PC-9 (cell line): ENCODE measurements at regions of chr7 and their contacts with region 1.

Region 1: GRCh38 chr7:90155206-90155605 is 937 bp downstream of the STEAP1 start:
- DNase-seq: no peak
- H3K4me3 ChIP-seq: peak overlapping the region; percentile 77; the same call in 1 of the 2 replicates
- H3K27ac ChIP-seq: no peak overlapping the region
- H3K4me1 ChIP-seq: peaks cover 17% of the 10 kb centered on the region
- H3K27me3 ChIP-seq: no peaks in the 10 kb centered on the region
- CTCF ChIP-seq: no peak

Region 2: DNA sequence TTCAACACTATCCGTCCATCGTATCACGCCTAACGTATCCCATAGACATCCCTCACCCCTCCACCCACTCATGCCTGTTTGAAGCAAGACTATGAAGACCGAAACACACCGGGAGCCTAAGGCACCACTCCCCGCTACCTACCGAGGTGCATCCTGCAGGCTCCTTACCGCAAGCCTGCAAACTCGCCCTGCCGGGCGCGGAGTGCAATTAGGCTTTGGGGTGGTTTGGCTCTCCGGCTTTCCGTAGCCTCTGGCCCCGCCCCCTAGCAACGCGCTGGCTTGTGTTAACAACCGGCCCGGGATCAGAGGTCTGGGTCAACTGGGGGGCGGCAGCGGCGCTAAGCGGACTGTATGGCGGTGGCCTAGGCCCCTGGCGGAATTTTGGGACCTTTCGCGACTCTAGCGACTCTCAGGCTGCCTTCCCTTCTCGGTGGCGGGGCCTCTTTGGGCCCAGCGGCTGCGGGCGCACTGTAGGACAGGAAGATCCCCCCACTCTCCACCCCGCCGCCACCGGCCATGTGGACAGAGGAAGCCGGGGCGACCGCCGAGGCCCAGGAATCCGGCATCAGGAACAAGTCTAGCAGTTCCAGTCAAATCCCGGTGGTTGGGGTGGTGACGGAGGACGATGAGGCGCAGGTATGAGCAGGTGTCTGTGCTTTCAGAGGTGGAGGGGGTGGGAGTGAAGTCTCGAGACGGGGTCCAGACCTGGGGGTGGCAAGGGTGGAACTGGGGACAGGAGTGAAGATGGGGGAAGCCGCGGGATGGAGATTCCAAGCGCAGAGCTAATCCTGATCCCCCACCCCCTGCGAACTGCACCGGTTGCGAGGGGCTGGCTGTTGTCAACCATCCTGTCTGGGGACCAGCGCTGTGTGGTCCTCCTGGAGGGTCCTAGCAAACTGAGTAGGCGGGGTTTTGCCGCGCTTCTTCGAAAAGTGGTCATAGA is 90.0 kb after region 1 on chr7 and contains the start of gene CFAP69:
- CTCF ChIA-PET with region 1: no interaction called
- POLR2A ChIA-PET with region 1: no interaction called
- intact Hi-C with region 1: loop called (anchors 1 kb)
- DNase-seq: peak; percentile 76 to 95
- H3K4me3 ChIP-seq: peak within 1 kb of the TSS; percentile 76
- H3K27ac ChIP-seq: no peak within 1 kb of the TSS
- H3K4me1 ChIP-seq: peaks cover 22% of the 10 kb centered on the region
- H3K27me3 ChIP-seq: no peaks in the 10 kb centered on the region
- CTCF ChIP-seq: 0 out of 2 replicates have a peak, but pooled peaks have one; percentile 18
- total RNA-seq, gene CFAP69: 15.0 and 18.5 TPM in 2 replicates

Region 3: GRCh38 chr7:90298145-90299038 is 143.2 kb after region 1 on chr7:
- CTCF ChIA-PET with region 1: no interaction called
- POLR2A ChIA-PET with region 1: no interaction called
- intact Hi-C with region 1: loop called (anchors 1 kb)
- DNase-seq: peak in 1 of 2 experiments; percentile 9
- H3K4me3 ChIP-seq: no peak overlapping the region
- H3K27ac ChIP-seq: no peak overlapping the region
- H3K4me1 ChIP-seq: no peaks in the 10 kb centered on the region
- H3K27me3 ChIP-seq: no peaks in the 10 kb centered on the region
- CTCF ChIP-seq: peak; percentile 64

Region 4: DNA sequence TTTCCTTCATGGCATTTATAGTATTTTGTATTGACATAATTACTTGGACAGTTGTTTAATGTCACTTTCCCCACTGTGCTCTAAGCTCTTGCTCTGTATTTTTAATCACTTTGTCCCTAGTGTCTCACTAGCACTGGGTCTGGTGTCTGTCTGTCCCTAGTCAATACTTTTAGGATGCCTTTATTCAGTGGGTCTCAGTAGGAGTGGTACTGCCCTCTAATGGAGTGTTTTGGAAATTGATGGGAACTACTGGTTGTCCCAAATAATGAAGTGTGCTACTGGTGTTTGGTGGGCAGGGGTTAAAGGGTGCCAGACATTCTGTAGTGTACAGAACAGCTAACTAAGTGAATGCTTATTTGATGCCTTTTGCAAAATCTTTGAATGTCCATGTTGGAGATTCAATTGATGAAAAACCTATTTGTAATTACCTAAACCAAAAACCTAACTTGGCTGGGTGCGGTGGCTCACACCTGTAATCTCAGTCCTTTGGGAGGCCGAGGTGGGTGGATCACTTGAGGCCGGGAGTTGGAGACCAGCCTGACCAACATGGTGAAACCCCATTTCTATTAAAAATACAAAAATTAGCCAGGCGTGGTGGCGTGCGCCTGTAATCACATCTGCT is 474.2 kb after region 1 on chr7:
- CTCF ChIA-PET with region 1: no interaction called
- POLR2A ChIA-PET with region 1: no interaction called
- intact Hi-C with region 1: loop called (anchors 10 kb)
- DNase-seq: no peak
- H3K4me3 ChIP-seq: no peak overlapping the region
- H3K27ac ChIP-seq: no peak overlapping the region
- H3K4me1 ChIP-seq: no peaks in the 10 kb centered on the region
- H3K27me3 ChIP-seq: no peaks in the 10 kb centered on the region
- CTCF ChIP-seq: peak; percentile 66

Region 5: DNA sequence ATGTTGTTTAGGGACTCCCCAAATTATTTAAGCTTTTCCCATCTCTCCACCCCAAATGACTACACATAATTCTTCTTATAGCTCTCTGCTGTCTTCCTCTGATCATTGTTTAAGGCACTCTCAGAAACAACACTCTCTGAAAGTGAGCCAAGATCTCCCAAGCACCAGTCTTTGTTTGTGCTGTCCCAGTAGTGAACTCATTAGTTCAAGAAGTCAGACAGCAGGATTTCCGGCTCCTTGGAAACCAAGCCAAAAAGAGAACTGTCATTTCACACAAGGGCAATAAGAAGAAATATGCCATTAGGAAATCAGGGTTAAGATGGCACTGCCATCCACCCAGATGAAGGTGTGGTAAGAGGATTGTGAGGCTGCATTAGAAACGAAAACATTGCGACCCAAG is 1192.1 kb after region 1 on chr7:
- CTCF ChIA-PET with region 1: no interaction called
- POLR2A ChIA-PET with region 1: no interaction called
- intact Hi-C with region 1: no loop called
- DNase-seq: no peak
- H3K4me3 ChIP-seq: no peak overlapping the region
- H3K27ac ChIP-seq: no peak overlapping the region
- H3K4me1 ChIP-seq: no peaks in the 10 kb centered on the region
- H3K27me3 ChIP-seq: no peaks in the 10 kb centered on the region
- CTCF ChIP-seq: no peak